ENCODE measurements at regions of chr10 and their contacts with region 1.

Region 1: DNA sequence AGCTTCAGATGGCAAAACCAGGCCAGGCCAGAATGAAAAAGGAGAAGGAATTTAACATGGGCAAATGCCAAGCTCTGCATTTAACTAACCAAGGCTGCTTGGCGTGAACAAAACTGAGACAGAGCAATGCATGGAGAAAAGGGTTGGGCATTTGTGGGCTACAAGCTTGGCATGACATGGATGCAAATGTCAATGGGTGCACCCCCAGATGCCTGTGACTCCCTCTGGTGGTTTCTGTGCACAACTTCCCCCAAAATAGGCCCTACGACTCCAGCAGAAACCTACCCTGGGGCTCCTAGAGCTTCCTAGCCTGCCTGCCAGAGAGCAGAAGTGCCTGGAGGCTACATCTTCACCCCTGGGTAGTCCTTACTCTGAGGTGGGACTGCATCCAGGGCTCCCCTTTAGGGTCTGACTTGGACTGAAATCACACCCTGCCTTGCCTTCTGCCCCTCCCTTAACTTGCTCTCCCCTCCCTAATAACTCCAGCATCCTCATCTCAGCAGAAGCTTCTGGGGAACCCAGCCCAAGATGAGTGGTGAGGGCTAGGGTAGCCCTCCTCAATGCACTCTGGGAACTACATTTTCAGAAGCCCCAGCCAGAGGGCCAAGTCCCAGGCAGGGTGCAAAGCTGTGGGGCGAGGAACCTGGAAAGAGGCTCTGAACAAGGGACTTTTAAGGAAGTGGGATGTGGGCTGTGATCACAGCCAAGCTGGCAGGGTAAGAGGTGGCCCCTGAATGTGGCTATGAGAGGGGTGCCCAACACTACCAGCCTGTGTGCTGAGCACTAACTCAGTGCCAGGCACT is 11.3 kb downstream of the GPRIN2 start:
- DNase-seq: peak; percentile 61 to 68 (median 68)
- H3K4me3 ChIP-seq: no peak overlapping the region
- H3K27ac ChIP-seq: no peak overlapping the region
- H3K4me1 ChIP-seq: peaks cover 0 to 9% (median 4%) of the 10 kb centered on the region in 4 experiments
- H3K27me3 ChIP-seq: peaks cover 0 to 17% (median 7%) of the 10 kb centered on the region in 5 experiments

Region 2: DNA sequence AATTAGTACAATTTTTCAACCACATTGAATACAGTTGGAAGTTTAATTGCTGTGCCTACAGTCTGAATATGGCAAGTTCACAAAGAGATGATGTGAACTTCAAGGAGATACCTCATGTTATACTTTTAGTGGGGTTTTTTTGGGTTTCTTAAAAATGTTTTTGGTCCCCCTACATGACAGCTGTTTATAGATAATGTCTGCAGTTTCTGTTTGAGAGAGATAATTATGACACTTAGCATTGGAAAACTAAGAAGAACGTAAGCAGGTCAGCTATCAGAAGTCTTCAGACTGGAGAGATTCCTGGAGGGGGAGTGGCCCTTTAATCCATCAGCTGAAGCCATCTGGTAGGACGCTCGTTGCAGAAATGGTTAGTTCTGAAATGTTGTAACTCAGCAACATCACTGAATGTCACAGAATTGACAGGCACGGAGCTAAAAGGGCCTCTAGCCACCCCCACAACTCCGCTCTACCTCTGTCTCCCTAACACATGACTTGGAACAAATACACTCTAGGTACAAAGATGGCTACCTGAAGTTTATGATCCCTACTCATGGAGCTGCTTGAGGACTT is 543.9 kb before region 1 on chr10:
- CTCF ChIA-PET with region 1: no interaction called
- POLR2A ChIA-PET with region 1: no interaction called
- DNase-seq: peak; percentile 76 to 89 (median 79)
- H3K4me3 ChIP-seq: no peak overlapping the region
- H3K27ac ChIP-seq: peak overlapping the region; percentile 58 to 75
- H3K4me1 ChIP-seq: no peaks in the 10 kb centered on the region
- H3K27me3 ChIP-seq: no peaks in the 10 kb centered on the region

Region 3: DNA sequence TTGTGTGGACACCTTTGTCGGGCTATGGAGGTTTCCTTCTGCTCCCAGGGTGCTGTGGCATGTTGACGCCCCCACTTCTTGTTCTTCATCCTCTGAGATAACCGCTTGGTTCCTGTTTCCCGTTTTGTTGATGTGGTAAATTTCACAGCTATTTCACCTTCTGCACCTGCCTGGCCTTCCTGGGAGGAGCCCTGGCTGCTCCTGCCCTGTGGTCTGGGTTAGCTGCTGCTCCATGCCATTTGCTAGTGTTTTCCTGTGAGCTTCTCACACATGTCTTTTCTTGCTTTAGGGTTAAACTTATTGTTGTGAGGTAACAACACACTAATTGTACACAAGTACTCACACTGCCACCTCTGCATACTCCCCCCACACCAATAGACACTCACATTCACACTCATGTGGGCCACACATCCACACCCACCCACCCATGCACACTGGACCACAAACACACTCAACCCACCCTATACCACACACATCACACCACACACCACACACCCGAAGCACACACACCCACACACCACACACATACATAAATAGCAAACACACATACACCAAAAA is 452.6 kb before region 1 on chr10:
- CTCF ChIA-PET with region 1: no interaction called
- POLR2A ChIA-PET with region 1: no interaction called
- DNase-seq: peak; percentile 80 to 94 (median 83)
- H3K4me3 ChIP-seq: peak overlapping the region in 3 of 7 experiments; percentile 13 to 42 (median 19)
- H3K27ac ChIP-seq: peak overlapping the region; percentile 57 to 84
- H3K4me1 ChIP-seq: peaks cover 0 to 81% (median 66%) of the 10 kb centered on the region in 4 experiments
- H3K27me3 ChIP-seq: no peaks in the 10 kb centered on the region

Region 4: GRCh38 chr10:46530249-46531186 is 14.7 kb before region 1 on chr10:
- CTCF ChIA-PET with region 1: interaction called, 15 read pairs
- POLR2A ChIA-PET with region 1: no interaction called
- DNase-seq: peak in 1 of 3 donors; percentile 37
- H3K4me3 ChIP-seq: no peak overlapping the region
- H3K27ac ChIP-seq: no peak overlapping the region
- H3K4me1 ChIP-seq: no peaks in the 10 kb centered on the region
- H3K27me3 ChIP-seq: peaks cover 0 to 2% (median 0%) of the 10 kb centered on the region in 5 experiments

Measured in common myeloid progenitor, CD34-positive (primary cell).